Esophagus squamous epithelium (tissue), 5 donors: ENCODE measurements at regions of chr11 and their contacts with region 1.

Region 1: GRCh38 chr11:47373876-47374720 is 4.2 kb downstream of the SPI1 start:
- DNase-seq: no peak
- H3K4me3 ChIP-seq: no peak overlapping the region
- H3K27ac ChIP-seq: peak overlapping the region in 3 of 4 donors; percentile 2 to 21 (median 7)
- H3K4me1 ChIP-seq: peaks cover 5 to 22% (median 8%) of the 10 kb centered on the region in 3 donors
- H3K27me3 ChIP-seq: no peaks in the 10 kb centered on the region
- CTCF ChIP-seq: peak; percentile 90 to 98 (median 94)
- POLR2A ChIP-seq: no peak

Region 2: DNA sequence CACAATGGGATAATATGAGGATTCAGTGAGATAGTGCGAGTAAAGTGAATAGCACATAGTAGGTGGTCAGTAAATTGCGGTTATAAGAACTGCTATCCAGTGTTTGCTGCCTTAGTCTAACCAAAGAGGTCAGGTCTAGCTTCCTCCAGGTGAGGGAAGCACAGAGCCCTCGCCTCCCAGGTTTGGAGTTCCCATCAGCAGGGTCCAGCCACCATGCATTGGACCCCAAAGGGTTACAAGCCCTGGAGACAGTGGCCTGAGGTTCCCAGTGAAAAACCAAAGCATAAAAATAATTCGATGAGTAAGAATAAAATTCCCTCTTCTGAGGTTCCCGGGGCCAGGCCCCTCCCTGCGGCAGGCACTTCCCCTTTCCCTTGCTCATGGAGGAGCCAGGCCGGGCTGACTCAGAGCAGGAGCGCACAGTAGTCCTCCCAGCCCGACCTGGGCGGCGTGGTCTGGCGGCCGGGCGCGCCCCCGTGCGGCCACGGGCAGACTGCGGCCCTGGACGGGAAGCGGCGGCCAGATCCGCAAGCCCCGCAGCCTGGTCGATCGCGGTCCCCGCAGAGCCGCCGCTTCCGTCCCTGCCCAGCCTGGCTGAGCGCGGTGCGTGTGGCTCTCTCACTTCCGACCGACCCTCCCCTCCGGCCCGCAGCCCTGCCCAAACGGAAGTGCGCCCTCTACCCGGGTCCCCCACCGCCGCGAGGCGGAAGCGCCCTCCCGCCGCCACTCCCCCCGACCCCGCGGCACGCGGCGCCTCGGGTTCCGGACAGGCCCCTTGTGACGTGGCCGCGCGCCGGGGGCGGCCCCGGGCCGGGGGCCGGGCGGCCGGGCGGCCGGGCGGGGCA is 33.9 kb after region 1 on chr11 and contains the start of gene SLC39A13:
- intact Hi-C with region 1: loop called (anchors 5 kb)
- DNase-seq: peak; percentile 89
- H3K4me3 ChIP-seq: peak within 1 kb of the TSS; percentile 32 to 84 (median 64)
- H3K27ac ChIP-seq: peak within 1 kb of the TSS; percentile 91 to 97 (median 94)
- H3K4me1 ChIP-seq: peaks cover 29 to 53% (median 37%) of the 10 kb centered on the region in 3 donors
- H3K27me3 ChIP-seq: no peaks in the 10 kb centered on the region
- CTCF ChIP-seq: peak; percentile 73 to 97 (median 94)
- POLR2A ChIP-seq: peak in 3 of 4 donors; percentile 57 to 89 (median 82)
- total RNA-seq, gene SLC39A13: 10.9 to 44.3 (median 13.8) TPM

Region 3: DNA sequence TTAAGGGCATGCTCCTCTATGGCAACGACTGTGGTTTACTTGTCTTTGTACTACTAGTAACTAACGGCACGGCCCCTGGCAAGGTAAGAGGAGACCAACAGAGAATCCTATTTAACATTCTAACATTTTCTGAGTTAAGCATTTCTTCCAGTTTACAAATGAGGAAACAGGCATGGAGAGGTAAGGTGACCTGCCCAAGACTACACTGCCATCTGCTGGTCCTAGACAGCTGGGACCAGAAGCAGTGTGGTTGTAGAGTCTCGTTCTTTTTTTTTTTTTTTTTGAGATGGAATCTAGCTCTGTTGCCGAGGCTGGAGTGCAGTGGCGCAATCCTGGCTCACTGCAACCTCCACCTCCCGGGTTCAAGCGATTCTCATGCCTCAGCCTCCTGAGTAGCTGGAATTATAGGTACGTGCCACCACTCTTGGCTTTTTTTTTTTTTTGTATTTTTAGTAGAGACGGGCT is 80.1 kb after region 1 on chr11:
- intact Hi-C with region 1: loop called (anchors 10 kb)
- DNase-seq: no peak
- H3K4me3 ChIP-seq: no peak overlapping the region
- H3K27ac ChIP-seq: no peak overlapping the region
- H3K4me1 ChIP-seq: no peaks in the 10 kb centered on the region
- H3K27me3 ChIP-seq: no peaks in the 10 kb centered on the region
- CTCF ChIP-seq: peak in 5 of 6 experiments; percentile 48 to 76 (median 71)
- POLR2A ChIP-seq: no peak

Region 4: GRCh38 chr11:47485110-47485509 is 111.0 kb after region 1 on chr11:
- intact Hi-C with region 1: no loop called
- DNase-seq: no peak
- H3K4me3 ChIP-seq: no peak overlapping the region
- H3K27ac ChIP-seq: no peak overlapping the region
- H3K4me1 ChIP-seq: peaks cover 0 to 22% (median 0%) of the 10 kb centered on the region in 3 donors
- H3K27me3 ChIP-seq: no peaks in the 10 kb centered on the region
- CTCF ChIP-seq: no peak
- POLR2A ChIP-seq: no peak

Region 5: DNA sequence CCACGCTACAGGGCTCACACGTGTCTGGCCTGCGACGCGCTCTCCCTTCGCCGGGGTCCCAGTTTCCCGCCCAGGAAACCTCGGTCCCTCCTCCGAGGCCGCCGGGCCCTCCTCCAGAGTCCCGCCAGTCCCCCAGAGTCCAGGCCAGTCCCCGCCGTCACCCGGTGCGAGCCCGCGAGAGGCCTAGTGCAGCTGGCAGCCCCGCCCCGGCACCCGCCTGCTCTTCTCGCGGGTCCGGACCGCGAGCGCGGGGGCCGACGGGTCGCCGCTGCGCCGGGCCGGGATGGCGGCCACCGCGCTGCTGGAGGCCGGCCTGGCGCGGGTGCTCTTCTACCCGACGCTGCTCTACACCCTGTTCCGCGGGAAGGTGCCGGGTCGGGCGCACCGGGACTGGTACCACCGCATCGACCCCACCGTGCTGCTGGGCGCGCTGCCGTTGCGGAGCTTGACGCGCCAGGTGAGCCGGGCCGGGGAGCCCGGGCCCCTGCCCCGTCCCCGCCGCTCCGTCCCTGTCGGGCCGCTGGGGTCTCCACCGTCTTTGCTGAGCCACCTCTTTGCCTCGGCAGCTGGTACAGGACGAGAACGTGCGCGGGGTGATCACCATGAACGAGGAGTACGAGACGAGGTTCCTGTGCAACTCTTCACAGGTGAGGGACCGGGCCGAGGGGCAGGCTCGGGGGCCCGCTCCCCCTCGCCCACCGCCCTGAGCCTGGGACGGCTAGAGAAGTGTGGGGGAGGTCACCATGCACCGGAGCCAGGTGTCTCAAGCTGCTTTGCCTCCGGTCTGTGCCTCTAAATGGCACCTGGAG is 191.4 kb after region 1 on chr11 and contains the start of gene PTPMT1:
- intact Hi-C with region 1: no loop called
- DNase-seq: no peak
- H3K4me3 ChIP-seq: peak within 1 kb of the TSS; percentile 66 to 96 (median 79)
- H3K27ac ChIP-seq: peak within 1 kb of the TSS; percentile 85 to 90 (median 88)
- H3K4me1 ChIP-seq: peaks cover 4 to 25% (median 8%) of the 10 kb centered on the region in 3 donors
- H3K27me3 ChIP-seq: no peaks in the 10 kb centered on the region
- CTCF ChIP-seq: no peak
- POLR2A ChIP-seq: peak in 2 of 4 donors; percentile 64 to 68
- total RNA-seq, gene PTPMT1: 67.7 to 92.3 (median 78.7) TPM

Region 6: DNA sequence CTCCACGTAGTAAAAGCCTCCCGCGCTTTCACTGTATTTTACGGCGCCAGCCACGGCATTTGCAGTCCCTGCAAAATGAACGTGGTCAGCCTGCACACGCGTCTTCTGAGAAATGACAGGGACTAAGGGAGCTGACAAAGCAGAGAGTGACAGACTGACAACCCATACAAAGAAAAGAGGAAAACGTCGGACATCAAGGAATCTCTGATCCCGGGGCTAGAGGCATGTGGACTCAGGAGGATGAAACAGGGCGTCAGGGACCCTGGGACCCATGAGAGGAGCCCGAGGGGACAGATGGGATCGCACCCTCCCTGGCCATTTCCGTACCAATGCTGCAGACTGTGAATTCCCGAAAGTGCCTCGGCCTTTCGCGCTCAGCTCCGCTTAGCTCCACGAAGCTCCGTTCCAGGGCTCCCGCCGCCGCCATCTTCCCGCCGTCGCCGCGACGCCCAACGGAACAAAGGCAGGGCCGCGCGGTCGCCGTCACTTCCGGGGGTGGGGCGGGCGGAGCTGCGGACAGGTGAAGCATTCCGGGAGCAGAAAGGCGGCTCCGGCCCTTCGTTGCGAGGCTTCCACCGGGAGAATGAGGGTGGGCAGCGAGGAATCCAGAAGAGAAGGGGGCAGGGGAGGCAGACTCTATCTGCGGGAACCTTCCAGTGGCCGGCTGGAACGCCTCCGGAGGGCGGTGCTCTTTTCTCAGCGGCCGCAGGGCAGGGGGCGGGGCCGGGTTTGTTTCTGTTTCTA is 474.0 kb after region 1 on chr11 and contains the start of gene NUP160:
- intact Hi-C with region 1: no loop called
- DNase-seq: peak; percentile 34
- H3K4me3 ChIP-seq: peak within 1 kb of the TSS; percentile 63 to 90 (median 72)
- H3K27ac ChIP-seq: peak within 1 kb of the TSS; percentile 94 to 98 (median 96)
- H3K4me1 ChIP-seq: peaks cover 0 to 51% (median 12%) of the 10 kb centered on the region in 3 donors
- H3K27me3 ChIP-seq: no peaks in the 10 kb centered on the region
- CTCF ChIP-seq: no peak
- POLR2A ChIP-seq: peak in 3 of 4 donors; percentile 64 to 81 (median 77)
- total RNA-seq, gene NUP160: 11.0 to 30.1 (median 20.7) TPM